Activated T-helper 1 cell treated with anti-CD3 and anti-CD28 coated beads, Interleukin-12 subunit alpha, Interleukin-12 subunit beta, Interleukin-2, Interleukin-4 antibody, amounts not matched to agents 30 ng/mL and 10 ng/mL and 1 ng/mL, durations not matched to agents 14 hours and 24 hours and 36 hours (primary cell): ENCODE measurements at regions of chr3 and their contacts with region 1.

Region 1: DNA sequence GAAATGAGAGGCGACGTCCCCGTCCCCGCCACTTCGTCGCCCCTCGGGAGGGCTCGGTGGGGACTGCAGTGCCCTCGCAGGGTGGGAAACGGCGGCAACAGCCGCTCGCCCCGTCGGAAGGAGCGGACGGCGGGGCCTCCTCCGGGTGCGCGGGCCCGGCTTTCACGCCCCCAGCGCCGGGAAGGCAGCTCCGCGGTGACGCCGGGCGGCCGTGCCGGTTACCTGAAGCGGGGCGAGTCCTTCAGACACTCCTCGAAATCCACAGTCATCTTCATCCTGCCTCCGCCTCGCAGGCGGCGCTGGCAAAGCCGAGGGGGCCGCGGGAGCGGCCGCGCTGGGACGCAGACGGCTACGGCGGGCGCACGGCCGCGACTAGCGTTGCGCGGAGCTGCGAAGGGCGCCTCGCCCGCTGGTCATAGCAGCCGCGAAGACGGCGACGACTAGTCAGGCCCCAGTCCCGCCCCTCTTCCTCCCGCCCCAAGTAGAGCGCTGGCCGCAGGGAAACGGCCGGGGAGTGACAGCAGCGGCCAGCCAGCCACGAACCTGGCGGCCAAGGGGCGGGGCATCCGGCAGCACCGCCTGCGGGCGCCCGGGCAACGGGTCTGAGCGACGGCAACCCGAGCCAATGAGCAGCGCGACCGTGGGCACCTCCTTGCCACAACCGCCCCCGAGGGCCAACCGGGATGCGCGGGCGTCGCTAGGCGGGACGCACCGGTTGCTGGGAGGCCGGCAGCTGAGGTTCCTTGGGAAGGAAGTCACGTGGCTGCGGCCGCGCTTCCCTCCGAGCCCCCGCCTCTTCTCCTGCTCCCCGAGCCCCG is at the start of gene ACAP2:
- DNase-seq: peak; percentile 99
- H3K4me3 Mint-ChIP-seq: peak within 1 kb of the TSS; percentile 92
- H3K27ac Mint-ChIP-seq: peak within 1 kb of the TSS; percentile 86
- H3K4me1 Mint-ChIP-seq: peaks cover 42% of the 10 kb centered on the region
- H3K27me3 Mint-ChIP-seq: no peaks in the 10 kb centered on the region
- total RNA-seq, gene ACAP2: 38.2 and 46.3 TPM in 2 replicates

Region 2: GRCh38 chr3:194671900-194672808 is 770.6 kb before region 1 on chr3 and contains the start of gene LSG1:
- intact Hi-C with region 1: loop called (anchors 5 kb)
- DNase-seq: peak; percentile 84
- H3K4me3 Mint-ChIP-seq: peak within 1 kb of the TSS; percentile 99
- H3K27ac Mint-ChIP-seq: peak within 1 kb of the TSS; percentile 97
- H3K4me1 Mint-ChIP-seq: peaks cover 68% of the 10 kb centered on the region
- H3K27me3 Mint-ChIP-seq: peaks cover 3% of the 10 kb centered on the region
- total RNA-seq, gene LSG1: 65.1 and 66.3 TPM in 2 replicates

Region 3: DNA sequence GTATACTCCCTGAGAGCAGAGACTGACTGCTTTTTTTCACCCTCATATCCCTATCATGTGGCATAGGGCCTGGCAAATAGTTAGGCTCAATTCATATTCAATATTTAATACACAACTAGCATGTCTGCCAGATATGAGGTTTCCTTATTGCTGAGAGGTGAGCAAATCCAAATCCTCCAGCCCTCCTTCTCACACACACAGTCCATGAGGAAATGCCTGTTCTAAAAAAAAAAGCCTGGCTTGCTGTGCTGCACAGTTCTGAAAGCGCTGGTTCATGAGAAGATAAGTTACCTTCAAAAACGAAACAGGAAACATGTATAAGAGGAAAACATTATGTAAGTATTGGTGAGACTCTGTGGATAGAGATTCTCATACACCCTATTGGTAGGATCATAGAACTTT is 15.5 kb after region 1 on chr3:
- intact Hi-C with region 1: loop called (anchors 2 kb)
- DNase-seq: no peak
- H3K4me3 Mint-ChIP-seq: no peak overlapping the region
- H3K27ac Mint-ChIP-seq: peak overlapping the region; percentile 80
- H3K4me1 Mint-ChIP-seq: peaks cover 21% of the 10 kb centered on the region
- H3K27me3 Mint-ChIP-seq: peaks cover 1% of the 10 kb centered on the region

Region 4: DNA sequence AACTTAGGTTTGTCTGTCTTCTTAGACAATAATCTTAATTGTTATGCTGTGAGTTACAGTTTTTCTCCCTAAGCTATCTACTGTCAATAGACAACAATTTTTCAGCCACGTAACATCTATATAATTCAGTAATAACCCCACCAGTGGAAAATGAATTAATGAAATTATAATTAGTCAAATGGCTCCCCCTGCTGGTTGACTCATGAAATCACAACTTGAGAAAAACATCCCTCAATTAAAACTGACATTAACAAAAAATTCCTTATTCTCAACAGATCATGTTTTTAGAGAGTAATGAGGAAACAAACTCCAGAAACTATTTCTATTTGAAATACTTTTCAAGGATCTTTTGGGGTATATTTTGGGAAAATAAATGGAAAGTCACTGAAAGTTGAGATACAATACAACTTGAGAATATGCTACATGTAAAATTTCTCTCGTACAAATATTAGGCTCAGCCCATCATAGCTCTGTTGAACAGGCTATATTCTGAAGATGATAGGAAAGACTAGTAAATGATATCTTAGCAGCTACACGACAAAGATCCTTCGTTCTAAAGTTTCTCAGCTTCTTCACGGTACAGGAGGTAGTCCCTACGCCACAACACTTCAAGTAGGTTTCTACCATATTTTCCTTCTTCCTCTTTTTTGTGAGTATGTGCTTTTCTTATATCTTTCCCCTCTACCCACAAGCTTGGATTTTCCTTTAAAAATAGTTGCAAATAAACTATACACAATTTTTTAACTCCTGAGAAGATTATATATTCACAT is 79.7 kb after region 1 on chr3:
- intact Hi-C with region 1: loop called (anchors 2 kb)
- DNase-seq: no peak
- H3K4me3 Mint-ChIP-seq: no peak overlapping the region
- H3K27ac Mint-ChIP-seq: no peak overlapping the region
- H3K4me1 Mint-ChIP-seq: peaks cover 35% of the 10 kb centered on the region
- H3K27me3 Mint-ChIP-seq: no peaks in the 10 kb centered on the region